ENCODE measurements at regions of chr2 and their contacts with region 1.

Region 1: DNA sequence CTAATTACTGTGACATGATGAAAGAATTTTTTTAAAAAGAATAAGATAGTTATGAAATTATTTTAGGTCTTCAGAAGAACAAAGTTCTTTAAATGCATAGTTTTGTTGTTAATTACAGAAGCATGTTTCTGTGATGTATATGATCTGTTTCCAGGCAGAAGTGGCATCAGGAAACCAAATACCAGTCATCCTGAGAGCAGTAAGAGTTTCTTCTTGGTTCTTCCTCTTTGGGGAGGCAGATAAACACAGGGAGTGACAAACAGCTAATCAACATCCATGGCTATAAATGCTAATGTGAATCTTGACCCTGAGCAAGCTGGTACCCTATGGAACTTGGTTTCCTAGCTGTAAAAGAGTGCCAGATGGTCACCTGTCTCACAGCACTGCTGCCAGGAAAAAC is 29.2 kb downstream of the WIPF1 start:
- DNase-seq: no peak
- H3K4me3 Mint-ChIP-seq: no peak overlapping the region
- H3K27ac Mint-ChIP-seq: peak overlapping the region; percentile 40
- H3K4me1 Mint-ChIP-seq: peaks cover 43% of the 10 kb centered on the region
- H3K27me3 Mint-ChIP-seq: no peaks in the 10 kb centered on the region

Region 2: DNA sequence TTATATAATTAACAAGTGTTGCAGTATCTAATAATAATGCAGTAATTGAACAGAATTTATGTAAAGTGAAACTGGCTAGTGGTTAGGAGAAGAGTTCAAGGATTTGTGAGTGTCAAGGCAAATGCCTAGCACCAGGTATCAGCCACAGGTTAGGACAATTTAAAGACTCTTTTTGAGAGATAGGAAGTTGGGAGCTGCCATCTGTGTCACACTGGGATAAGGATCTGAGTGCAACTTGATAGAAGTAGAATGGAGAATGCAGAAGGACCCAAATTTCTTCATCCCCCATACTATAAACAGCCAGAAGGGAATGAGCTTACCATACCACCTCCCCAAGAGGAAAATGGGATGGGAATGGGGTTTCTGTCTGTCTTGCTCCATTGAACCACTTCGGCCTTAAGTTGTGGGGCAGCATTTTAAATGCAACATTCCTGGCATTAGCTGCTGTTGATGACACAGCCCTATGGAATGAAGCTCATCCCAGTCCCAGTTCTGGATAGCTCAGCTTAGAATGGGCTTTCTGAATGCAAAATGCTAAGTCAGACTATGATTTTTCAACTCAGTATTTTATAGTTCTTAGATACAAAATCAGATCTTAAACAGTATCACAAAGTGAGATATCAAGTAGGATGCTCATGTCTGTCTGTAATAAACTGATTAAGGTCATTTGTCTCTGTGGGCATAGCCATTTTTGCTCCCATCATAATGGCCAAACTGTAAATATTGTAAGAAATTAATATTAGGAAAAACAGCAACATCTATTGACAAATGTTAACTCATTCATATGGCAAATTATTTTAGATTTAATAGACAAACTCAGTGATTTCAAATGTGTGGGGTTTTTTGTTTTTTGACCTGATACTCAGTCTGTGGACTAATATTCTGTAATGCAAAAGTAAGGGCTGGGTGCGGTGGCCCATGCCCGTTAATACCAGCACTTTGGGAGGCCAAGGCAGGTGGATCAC is 125.6 kb before region 1 on chr2:
- intact Hi-C with region 1: no loop called
- DNase-seq: no peak
- H3K4me3 Mint-ChIP-seq: no peak overlapping the region
- H3K27ac Mint-ChIP-seq: no peak overlapping the region
- H3K4me1 Mint-ChIP-seq: no peaks in the 10 kb centered on the region
- H3K27me3 Mint-ChIP-seq: no peaks in the 10 kb centered on the region

Region 3: DNA sequence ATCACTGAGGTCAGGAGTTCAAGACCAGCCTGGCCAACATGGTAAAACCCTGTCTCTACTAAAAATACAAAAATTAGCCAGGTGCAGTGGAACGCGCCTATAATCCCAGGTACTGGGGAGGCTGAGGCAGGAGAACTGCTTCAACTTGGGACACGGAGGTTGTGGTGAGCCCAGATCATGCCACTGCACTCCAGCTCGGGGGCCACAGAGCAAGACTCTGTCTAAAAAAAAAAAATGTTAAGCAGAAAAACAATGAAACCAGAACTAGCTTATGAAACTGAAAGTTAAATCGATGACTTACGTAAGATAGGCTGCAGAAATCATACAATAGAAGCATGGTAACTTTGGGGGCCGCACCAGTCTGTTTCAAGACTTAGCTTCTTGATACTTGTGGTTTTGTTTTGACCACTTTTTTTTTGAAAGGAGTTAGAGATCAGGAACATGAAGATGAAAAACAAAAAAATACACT is 75.4 kb before region 1 on chr2:
- intact Hi-C with region 1: loop called (anchors 5 kb)
- DNase-seq: peak; percentile 89
- H3K4me3 Mint-ChIP-seq: peak overlapping the region; percentile 79
- H3K27ac Mint-ChIP-seq: peak overlapping the region; percentile 94
- H3K4me1 Mint-ChIP-seq: peaks cover 59% of the 10 kb centered on the region
- H3K27me3 Mint-ChIP-seq: no peaks in the 10 kb centered on the region